Activated CD4-positive, alpha-beta T cell treated with anti-CD3 and anti-CD28 coated beads, Interleukin-2, amount 10 ng/mL, durations not matched to agents 24 days and 14 days (primary cell): ENCODE measurements at regions of chr19 and their contacts with region 1.

Region 1: DNA sequence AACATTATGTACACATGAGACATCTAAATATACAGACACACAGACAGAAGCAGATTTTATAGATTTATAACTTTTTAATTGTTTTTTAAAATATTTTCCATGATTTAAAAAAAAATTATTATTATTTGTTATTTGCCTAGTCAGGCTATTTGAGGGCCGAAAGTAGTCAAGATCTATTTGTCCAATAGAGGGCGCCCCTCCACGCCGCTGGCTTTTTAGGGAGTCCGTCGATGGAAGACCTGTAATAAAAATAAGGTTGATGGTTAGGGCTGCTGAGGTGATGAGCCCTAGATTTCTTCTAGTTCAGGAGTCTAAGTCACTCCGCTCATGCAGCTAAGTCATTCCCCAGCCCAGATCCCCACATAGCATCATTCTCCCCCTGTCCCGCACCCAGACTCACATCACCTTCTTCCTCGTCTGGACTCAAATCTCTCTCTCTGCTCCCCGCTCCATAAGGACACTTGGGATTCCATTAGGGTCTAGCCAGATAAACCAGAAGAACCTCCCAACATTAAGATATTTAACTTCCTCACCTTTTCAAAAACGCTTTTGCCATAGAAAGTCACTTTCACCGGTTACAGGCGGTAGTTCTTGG is 33.9 kb upstream of the CEACAM21 start:
- DNase-seq: peak; percentile 93
- H3K4me3 Mint-ChIP-seq: peak overlapping the region; percentile 62
- H3K27ac Mint-ChIP-seq: peak overlapping the region; percentile 82
- H3K4me1 Mint-ChIP-seq: peaks cover 61% of the 10 kb centered on the region
- H3K27me3 Mint-ChIP-seq: no peaks in the 10 kb centered on the region

Region 2: DNA sequence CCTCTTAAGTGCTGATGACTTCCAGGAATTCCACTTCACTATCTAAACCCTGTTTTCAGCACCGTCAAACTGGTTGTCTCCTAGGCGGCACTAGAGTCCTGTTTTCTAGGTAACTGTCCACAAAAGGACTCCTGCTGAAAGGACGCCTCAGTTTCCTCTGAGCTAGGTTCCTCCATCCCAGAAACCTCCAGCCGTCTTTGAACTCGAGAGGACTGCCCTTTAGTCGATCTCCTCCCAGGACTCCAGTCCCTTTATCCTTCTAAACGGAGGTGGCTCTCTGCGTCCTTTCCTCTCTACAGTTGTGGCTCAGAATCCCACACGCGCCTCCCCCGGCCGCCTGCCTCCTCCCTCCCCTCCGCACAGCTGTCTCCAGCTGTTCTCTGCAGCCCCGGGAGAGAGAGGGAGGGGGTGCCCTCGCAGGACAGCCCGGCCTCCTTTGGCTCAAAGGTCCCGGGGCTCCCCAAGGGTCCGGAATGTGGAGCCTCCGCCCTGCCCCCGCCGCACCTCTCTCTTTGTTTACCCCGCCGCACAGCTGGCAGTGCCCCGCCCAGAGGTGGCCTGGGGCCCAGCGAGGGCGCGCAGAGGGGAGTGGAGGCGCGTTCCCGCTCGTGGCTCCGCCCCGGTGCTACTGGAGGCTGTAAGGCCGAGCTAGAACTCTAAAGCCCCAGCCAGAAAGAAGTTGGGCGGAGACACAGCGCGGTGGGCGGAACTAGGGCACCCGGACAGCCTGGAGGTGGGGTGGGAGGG is 938.5 kb before region 1 on chr19:
- intact Hi-C with region 1: loop called (anchors 10 kb)
- DNase-seq: peak; percentile 99
- H3K4me3 Mint-ChIP-seq: peak overlapping the region; percentile 94
- H3K27ac Mint-ChIP-seq: peak overlapping the region; percentile 92
- H3K4me1 Mint-ChIP-seq: peaks cover 60% of the 10 kb centered on the region
- H3K27me3 Mint-ChIP-seq: peaks cover 27% of the 10 kb centered on the region

Region 3: DNA sequence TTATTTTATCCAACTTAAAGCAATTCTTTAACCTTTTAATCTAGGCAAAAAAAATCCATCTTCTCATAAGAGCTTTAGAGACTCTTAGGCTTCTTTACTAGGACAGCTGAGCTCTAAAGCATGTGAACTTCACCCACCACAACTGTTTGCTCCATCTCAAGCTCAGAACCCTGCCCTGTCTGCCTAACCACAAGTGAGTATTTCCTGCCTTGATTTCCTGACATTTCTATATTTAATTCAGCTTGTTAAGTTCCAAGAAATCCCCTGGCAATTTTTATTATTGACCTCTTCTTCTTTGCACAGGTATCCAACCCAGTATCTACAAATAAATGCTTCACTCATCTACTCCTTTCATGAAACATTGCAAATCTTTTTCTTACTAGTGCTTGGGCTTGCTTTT is 12.8 kb after region 1 on chr19:
- intact Hi-C with region 1: loop called (anchors 1 kb)
- DNase-seq: peak; percentile 86
- H3K4me3 Mint-ChIP-seq: peak overlapping the region; percentile 99
- H3K27ac Mint-ChIP-seq: peak overlapping the region; percentile 84
- H3K4me1 Mint-ChIP-seq: peaks cover 70% of the 10 kb centered on the region
- H3K27me3 Mint-ChIP-seq: no peaks in the 10 kb centered on the region

Region 4: GRCh38 chr19:41570639-41571112 is 28.6 kb after region 1 on chr19:
- intact Hi-C with region 1: loop called (anchors 1 kb)
- DNase-seq: peak; percentile 95
- H3K4me3 Mint-ChIP-seq: no peak overlapping the region
- H3K27ac Mint-ChIP-seq: peak overlapping the region; percentile 60
- H3K4me1 Mint-ChIP-seq: peaks cover 22% of the 10 kb centered on the region
- H3K27me3 Mint-ChIP-seq: no peaks in the 10 kb centered on the region

Region 5: DNA sequence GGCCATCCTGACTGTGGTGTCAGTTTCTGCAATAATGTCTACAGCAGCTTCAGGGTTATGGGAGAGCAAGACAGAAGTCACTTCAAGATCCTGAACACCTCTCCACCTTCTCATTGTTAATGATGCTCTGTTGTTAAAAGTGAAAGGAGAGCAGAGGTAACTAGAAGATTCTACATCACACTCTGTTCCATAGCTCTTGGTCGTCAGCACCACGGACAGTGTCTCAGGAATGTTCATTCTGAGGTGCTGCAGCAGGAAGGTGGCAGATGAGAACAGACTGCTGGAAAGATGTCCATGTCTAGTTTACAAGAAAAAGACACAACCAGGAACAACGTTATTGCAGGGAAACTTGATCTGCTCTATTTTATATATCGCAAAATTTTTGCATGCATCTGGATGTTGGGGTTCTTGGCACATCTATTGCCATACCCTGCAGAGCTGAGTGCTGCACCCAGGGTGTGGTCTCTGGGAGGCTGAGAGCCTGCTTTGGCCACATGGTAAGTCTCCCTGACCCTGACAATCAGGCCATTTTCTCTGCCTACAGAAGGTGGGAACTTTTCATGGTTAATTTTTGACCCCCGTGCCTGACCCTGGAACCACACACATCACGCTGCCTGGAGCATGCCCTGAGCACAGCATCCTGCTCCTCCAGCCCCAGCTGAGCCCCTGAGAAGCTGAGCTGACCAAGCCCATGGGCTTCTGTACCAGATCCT is 46.6 kb after region 1 on chr19:
- intact Hi-C with region 1: no loop called
- DNase-seq: peak; percentile 80
- H3K4me3 Mint-ChIP-seq: no peak overlapping the region
- H3K27ac Mint-ChIP-seq: no peak overlapping the region
- H3K4me1 Mint-ChIP-seq: peaks cover 3% of the 10 kb centered on the region
- H3K27me3 Mint-ChIP-seq: peaks cover 3% of the 10 kb centered on the region

Region 6: DNA sequence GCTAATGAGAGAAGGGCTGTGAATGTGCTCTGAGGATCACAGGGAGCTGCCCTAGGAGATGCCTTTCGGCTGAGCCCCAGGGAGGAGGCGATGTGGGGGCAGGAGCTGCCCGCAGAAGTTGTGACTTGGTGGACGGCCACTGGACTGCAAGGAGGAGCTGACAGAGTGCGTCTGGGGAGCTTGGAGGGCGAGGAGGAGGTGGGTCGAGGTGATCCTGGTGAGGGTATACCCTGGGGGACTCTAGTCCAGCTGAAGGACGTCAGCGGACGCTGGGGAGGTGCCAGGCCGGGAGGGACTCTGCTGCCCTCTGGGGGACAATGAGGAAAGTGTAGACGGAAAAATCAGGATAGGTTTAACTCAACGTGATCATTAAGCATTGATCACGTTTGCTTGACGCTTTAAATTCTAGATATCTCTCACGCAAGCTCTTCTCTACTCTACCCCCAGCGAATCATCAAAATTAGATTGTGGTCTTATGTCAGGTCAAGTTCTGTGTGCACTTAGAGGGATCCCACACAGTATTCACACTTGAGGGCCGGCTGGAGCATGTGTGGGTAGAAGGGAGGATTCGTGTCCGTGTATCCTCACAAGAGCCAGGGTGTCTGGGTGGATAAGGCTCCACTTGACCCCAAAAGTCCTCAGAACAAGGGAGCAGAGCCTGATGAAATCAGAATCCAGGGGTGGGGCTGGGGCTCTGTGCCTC is 149.3 kb after region 1 on chr19:
- intact Hi-C with region 1: no loop called
- DNase-seq: peak; percentile 77
- H3K4me3 Mint-ChIP-seq: no peak overlapping the region
- H3K27ac Mint-ChIP-seq: no peak overlapping the region
- H3K4me1 Mint-ChIP-seq: peaks cover 3% of the 10 kb centered on the region
- H3K27me3 Mint-ChIP-seq: peaks cover 21% of the 10 kb centered on the region

Region 7: GRCh38 chr19:41945135-41945766 is 403.2 kb after region 1 on chr19:
- intact Hi-C with region 1: loop called (anchors 10 kb)
- DNase-seq: peak; percentile 90
- H3K4me3 Mint-ChIP-seq: peak overlapping the region; percentile 76
- H3K27ac Mint-ChIP-seq: peak overlapping the region; percentile 99
- H3K4me1 Mint-ChIP-seq: peaks cover 49% of the 10 kb centered on the region
- H3K27me3 Mint-ChIP-seq: peaks cover 9% of the 10 kb centered on the region